ENCODE measurements at regions of chr20 and their contacts with region 1.

Region 1: GRCh38 chr20:37259865-37260264 is 1.7 kb downstream of the GHRH start:
- DNase-seq: no peak
- H3K4me3 Mint-ChIP-seq: no peak overlapping the region
- H3K27ac Mint-ChIP-seq: no peak overlapping the region
- H3K4me1 Mint-ChIP-seq: no peaks in the 10 kb centered on the region
- H3K27me3 Mint-ChIP-seq: peaks cover 54% of the 10 kb centered on the region
- CTCF ChIP-seq: no peak

Region 2: GRCh38 chr20:37207171-37207570 is 52.7 kb before region 1 on chr20:
- CTCF ChIA-PET with region 1: no interaction called
- POLR2A ChIA-PET with region 1: no interaction called
- intact Hi-C with region 1: no loop called
- DNase-seq: no peak
- H3K4me3 Mint-ChIP-seq: no peak overlapping the region
- H3K27ac Mint-ChIP-seq: no peak overlapping the region
- H3K4me1 Mint-ChIP-seq: no peaks in the 10 kb centered on the region
- H3K27me3 Mint-ChIP-seq: no peaks in the 10 kb centered on the region
- CTCF ChIP-seq: no peak

Region 3: GRCh38 chr20:37226889-37227288 is 33.0 kb before region 1 on chr20:
- CTCF ChIA-PET with region 1: no interaction called
- POLR2A ChIA-PET with region 1: no interaction called
- intact Hi-C with region 1: no loop called
- DNase-seq: no peak
- H3K4me3 Mint-ChIP-seq: no peak overlapping the region
- H3K27ac Mint-ChIP-seq: no peak overlapping the region
- H3K4me1 Mint-ChIP-seq: no peaks in the 10 kb centered on the region
- H3K27me3 Mint-ChIP-seq: no peaks in the 10 kb centered on the region
- CTCF ChIP-seq: no peak

Region 4: GRCh38 chr20:37270576-37271420 is 10.9 kb after region 1 on chr20:
- CTCF ChIA-PET with region 1: interaction called, 16 read pairs
- POLR2A ChIA-PET with region 1: no interaction called
- intact Hi-C with region 1: no loop called
- DNase-seq: peak; percentile 64
- H3K4me3 Mint-ChIP-seq: no peak overlapping the region
- H3K27ac Mint-ChIP-seq: no peak overlapping the region
- H3K4me1 Mint-ChIP-seq: peaks cover 15% of the 10 kb centered on the region
- H3K27me3 Mint-ChIP-seq: no peaks in the 10 kb centered on the region
- CTCF ChIP-seq: no peak

Region 5: DNA sequence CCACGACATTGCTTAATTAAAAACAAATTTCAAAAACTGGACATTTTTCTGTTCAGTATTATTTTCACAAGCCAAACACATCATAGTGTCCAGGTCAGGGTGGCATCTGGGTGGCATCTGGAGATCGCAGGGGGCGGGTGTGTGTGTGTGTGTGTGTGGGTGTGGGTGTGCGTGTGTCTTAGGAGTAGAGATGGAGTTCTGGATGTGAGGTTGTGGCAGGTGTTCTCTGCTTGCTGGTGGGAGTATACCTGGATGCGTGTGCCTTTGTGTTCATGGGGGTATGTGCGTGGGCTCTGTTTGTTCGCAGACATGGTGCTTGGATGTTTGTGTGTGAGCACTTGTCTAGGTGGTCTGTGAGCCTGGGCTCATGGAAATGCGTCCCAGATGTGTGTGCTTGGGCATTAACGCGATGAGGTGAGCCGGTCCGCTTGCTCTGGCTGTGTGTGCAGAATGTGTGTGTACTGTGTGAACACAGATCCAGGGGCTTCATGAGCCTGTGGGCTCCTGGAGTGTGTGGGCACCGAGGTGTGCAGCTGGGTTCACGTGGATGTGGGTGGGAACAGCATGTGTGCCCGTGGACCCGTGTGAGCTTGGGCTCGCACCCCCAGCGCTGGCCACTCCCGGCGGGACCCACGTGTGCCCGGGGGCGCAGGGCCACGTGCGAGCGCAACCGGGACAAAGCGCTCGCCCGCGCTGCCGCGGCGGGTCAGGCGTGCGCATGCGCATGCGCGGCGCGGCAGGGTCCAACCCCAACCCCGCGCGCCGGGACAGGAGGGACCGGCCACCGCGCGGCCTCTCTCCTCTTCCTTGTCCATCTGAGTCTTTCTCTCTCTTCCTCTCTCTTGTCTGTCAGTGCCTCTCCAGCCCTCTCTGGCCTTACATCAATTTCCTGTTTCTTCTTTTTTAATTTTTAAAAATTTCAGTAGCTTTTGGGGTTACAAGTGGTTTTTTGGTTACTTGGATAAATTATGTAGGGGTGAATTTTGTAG is 146.4 kb after region 1 on chr20:
- CTCF ChIA-PET with region 1: no interaction called
- POLR2A ChIA-PET with region 1: no interaction called
- intact Hi-C with region 1: no loop called
- DNase-seq: peak; percentile 49
- H3K4me3 Mint-ChIP-seq: peak overlapping the region; percentile 64
- H3K27ac Mint-ChIP-seq: no peak overlapping the region
- H3K4me1 Mint-ChIP-seq: peaks cover 12% of the 10 kb centered on the region
- H3K27me3 Mint-ChIP-seq: no peaks in the 10 kb centered on the region
- CTCF ChIP-seq: no peak

Measured in MCF 10A (cell line).